ENCODE measurements at regions of chr7 and their contacts with region 1.

Region 1: GRCh38 chr7:142873281-142873787 is 12.2 kb downstream of the TRPV6 start:
- DNase-seq: peak in 1 of 3 donors; percentile 27
- H3K4me3 ChIP-seq: no peak overlapping the region
- H3K27ac ChIP-seq: no peak overlapping the region
- H3K4me1 ChIP-seq: no peaks in the 10 kb centered on the region
- H3K27me3 ChIP-seq: no peaks in the 10 kb centered on the region

Region 2: GRCh38 chr7:142859829-142860228 is 13.5 kb before region 1 on chr7:
- CTCF ChIA-PET with region 1: interaction called, 24 read pairs
- POLR2A ChIA-PET with region 1: no interaction called
- DNase-seq: no peak
- H3K4me3 ChIP-seq: no peak overlapping the region
- H3K27ac ChIP-seq: no peak overlapping the region
- H3K4me1 ChIP-seq: peaks cover 0 to 19% (median 15%) of the 10 kb centered on the region in 4 experiments
- H3K27me3 ChIP-seq: no peaks in the 10 kb centered on the region

Measured in common myeloid progenitor, CD34-positive (primary cell).